MCF 10A (cell line): ENCODE measurements at regions of chr12 and their contacts with region 1.

Region 1: GRCh38 chr12:105053116-105053572 is 31.1 kb downstream of the ALDH1L2 start:
- DNase-seq: peak; percentile 82
- H3K4me3 Mint-ChIP-seq: no peak overlapping the region
- H3K27ac Mint-ChIP-seq: peak overlapping the region; percentile 19
- H3K4me1 Mint-ChIP-seq: peaks cover 5% of the 10 kb centered on the region
- H3K27me3 Mint-ChIP-seq: no peaks in the 10 kb centered on the region
- CTCF ChIP-seq: peak; percentile 77

Region 2: DNA sequence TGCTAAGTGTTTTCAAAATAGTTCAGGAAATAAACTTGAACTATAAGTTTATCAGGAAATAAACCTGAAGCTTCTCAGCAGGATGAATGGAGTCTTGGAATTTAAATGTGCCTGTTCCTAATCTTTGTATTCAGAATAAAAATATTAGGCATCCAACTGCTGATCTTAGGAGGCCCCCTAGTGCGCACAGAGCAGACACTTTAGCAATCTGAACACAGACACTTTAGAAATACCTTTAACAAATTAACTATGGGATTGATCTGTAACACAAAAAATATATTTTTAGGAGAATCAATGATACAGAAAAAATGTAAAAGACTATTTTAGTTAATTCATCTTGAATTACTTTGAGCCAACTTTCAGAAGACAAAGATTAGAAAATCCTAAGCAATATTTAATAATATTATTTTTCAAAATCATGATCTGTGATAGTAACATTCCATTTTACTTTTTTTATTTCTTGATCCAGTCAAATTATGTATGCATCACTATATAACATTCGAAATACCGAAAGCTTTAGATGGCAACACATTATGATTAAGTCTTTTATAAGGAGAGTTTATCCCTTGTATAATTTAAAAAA is 175.9 kb before region 1 on chr12:
- CTCF ChIA-PET with region 1: no interaction called
- POLR2A ChIA-PET with region 1: no interaction called
- intact Hi-C with region 1: loop called (anchors 1 kb)
- DNase-seq: peak; percentile 40
- H3K4me3 Mint-ChIP-seq: no peak overlapping the region
- H3K27ac Mint-ChIP-seq: no peak overlapping the region
- H3K4me1 Mint-ChIP-seq: no peaks in the 10 kb centered on the region
- H3K27me3 Mint-ChIP-seq: no peaks in the 10 kb centered on the region
- CTCF ChIP-seq: peak; percentile 54

Region 3: GRCh38 chr12:105069936-105070702 is 17.0 kb after region 1 on chr12:
- CTCF ChIA-PET with region 1: interaction called, 21 read pairs
- POLR2A ChIA-PET with region 1: no interaction called
- intact Hi-C with region 1: no loop called
- DNase-seq: no peak
- H3K4me3 Mint-ChIP-seq: no peak overlapping the region
- H3K27ac Mint-ChIP-seq: no peak overlapping the region
- H3K4me1 Mint-ChIP-seq: no peaks in the 10 kb centered on the region
- H3K27me3 Mint-ChIP-seq: no peaks in the 10 kb centered on the region
- CTCF ChIP-seq: no peak